Breast epithelium (tissue), 4 donors: ENCODE measurements at regions of chr6 and their contacts with region 1.

Region 1: DNA sequence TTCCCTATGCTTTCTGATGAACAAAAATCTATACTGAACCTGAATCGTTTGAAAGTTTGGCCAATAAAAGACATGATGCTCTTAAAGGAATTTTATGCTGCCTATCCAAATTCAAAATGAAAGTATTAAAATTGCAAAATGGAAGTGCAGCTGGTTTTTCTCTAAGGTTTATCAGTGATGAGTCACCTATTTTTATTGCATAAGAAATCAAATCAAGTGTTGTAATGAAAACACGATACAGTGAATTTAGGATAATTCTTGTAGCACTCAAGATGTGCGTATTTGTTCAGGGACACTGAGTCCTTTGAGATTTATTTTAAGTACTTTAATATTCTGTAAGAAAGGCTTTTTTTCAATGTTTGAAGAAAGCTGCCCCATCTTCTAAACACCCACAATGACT is 409.5 kb downstream of the ADGRB3 start:
- DNase-seq: no peak
- H3K4me3 ChIP-seq: no peak overlapping the region
- H3K27ac ChIP-seq: no peak overlapping the region
- H3K4me1 ChIP-seq: no peaks in the 10 kb centered on the region
- H3K27me3 ChIP-seq: no peaks in the 10 kb centered on the region
- CTCF ChIP-seq: no peak
- POLR2A ChIP-seq: no peak

Region 2: GRCh38 chr6:68852791-68853190 is 191.7 kb before region 1 on chr6:
- intact Hi-C with region 1: loop called (anchors 10 kb)
- DNase-seq: no peak
- H3K4me3 ChIP-seq: no peak overlapping the region
- H3K27ac ChIP-seq: no peak overlapping the region
- H3K4me1 ChIP-seq: no peaks in the 10 kb centered on the region
- H3K27me3 ChIP-seq: no peaks in the 10 kb centered on the region
- CTCF ChIP-seq: no peak
- POLR2A ChIP-seq: no peak

Region 3: DNA sequence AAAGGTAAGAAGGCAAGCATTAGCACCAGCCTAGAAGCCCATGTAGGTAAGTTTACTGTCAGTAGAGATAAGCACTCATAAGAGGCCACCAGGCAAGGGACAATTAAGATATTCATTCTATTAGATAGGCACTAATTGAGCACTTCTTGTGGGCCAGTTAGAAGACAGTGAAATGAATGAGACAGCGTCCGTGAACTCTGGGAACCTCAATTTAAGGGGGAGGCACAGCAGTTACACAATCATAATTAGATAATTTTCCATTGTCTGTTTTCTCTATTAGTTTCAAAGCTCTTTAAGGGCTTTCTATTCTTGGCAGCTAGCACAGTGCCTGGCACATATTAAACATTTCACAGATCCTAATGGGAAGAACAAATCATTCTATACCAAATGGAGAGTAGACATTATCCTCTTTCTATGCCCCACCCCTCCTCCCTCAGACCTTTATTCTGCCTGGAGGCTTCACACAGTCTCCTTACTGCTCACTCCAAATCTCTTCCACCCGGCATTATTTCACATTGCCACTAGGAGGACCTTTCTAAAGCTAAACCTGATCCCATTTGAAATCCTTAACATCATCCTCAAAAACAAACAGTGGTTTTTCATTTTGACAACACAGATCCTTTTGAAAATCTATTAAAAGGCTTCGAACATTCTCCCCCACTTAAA is 120.2 kb after region 1 on chr6:
- intact Hi-C with region 1: no loop called
- DNase-seq: no peak
- H3K4me3 ChIP-seq: no peak overlapping the region
- H3K27ac ChIP-seq: no peak overlapping the region
- H3K4me1 ChIP-seq: no peaks in the 10 kb centered on the region
- H3K27me3 ChIP-seq: no peaks in the 10 kb centered on the region
- CTCF ChIP-seq: no peak
- POLR2A ChIP-seq: no peak